HEK293 (cell line): ENCODE measurements at regions of chr1 and their contacts with region 1.

Region 1: GRCh38 chr1:9234223-9235095 is at the start of gene H6PD:
- H3K4me3 ChIP-seq: peak within 1 kb of the TSS; percentile 67
- H3K27ac ChIP-seq: peak within 1 kb of the TSS; percentile 91
- H3K4me1 ChIP-seq: peaks cover 4% of the 10 kb centered on the region; the same call in 1 of the 2 replicates
- CTCF ChIP-seq: peak; percentile 84

Region 2: DNA sequence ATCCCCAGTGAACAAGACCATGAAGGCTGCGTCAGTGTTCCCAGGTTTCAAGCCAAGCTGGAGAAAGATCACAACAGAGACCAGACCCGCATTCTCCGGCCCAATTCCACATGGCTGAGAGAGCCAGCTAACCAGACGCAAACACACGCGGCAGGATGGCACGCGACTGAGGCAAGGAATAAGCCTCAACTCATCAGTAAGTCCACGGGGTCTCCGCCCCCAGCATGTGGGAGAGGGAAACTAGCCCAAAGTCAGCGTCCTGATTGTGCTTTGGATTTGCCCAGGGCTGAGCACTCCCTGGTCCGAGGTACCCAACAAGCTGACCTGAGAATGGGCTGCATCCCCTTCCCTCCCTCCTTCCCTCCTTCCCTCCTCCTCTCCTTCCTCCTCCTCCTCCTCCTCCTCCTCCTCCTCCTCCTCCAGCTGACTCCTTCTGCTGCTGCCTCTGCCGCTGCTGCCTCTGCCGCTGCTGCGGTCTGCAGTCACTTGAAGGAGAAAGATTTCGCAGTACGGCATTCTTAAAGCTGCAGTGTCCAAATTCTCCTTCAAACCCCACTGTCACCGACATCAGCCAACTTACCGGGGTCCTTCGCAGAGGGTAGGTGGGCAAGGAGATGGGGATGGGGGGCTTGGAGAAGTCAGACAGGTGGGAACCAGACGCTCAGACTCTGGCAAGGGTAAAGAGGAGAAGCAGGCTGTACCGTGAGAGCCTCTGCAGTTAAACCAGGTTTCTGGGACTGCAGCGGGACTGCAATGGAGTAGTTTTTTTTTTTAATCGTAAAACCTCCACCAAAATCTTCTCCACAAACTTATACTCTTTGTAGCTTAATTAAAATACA is 32.8 kb before region 1 on chr1:
- CTCF ChIA-PET with region 1: interaction called, 12 read pairs
- POLR2A ChIA-PET with region 1: interaction called, 10 read pairs
- H3K4me3 ChIP-seq: peak overlapping the region; percentile 60
- H3K27ac ChIP-seq: no peak overlapping the region
- H3K4me1 ChIP-seq: no peaks in the 10 kb centered on the region
- CTCF ChIP-seq: no peak

Region 3: DNA sequence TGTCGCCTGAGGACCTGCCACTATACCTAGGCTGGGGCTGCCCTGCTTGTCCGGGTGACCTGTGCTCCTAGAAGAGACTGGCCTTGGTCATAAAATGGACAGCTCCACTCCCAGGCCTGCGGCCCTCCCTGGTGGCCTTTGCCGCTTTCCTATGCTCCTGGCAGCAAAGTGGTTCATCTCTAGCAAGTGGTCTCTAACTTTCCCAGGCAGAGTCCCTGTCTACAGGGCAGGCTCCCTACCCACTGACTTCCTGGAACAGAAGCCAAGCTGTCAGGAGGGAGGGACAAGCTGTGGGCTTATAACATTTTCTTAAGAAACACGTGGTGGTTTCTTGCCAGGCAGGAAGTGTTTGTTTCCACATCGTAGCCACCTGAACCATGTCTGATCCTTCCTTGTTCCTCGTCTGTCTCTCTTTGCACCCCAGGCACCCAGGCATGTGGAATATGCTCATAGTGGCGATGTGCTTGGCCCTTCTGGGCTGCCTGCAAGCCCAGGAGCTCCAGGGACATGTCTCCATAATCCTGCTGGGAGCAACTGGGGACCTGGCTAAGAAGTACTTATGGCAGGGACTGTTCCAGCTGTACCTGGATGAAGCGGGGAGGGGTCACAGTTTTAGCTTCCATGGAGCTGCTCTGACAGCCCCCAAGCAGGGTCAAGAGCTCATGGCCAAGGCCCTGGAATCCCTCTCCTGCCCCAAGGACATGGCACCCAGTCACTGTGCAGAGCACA is 10.2 kb after region 1 on chr1:
- CTCF ChIA-PET with region 1: interaction called, 14 read pairs
- POLR2A ChIA-PET with region 1: interaction called, 8 read pairs
- H3K4me3 ChIP-seq: no peak overlapping the region
- H3K27ac ChIP-seq: no peak overlapping the region
- H3K4me1 ChIP-seq: no peaks in the 10 kb centered on the region
- CTCF ChIP-seq: no peak